ENCODE measurements at regions of chr3 and their contacts with region 1.

Region 1: DNA sequence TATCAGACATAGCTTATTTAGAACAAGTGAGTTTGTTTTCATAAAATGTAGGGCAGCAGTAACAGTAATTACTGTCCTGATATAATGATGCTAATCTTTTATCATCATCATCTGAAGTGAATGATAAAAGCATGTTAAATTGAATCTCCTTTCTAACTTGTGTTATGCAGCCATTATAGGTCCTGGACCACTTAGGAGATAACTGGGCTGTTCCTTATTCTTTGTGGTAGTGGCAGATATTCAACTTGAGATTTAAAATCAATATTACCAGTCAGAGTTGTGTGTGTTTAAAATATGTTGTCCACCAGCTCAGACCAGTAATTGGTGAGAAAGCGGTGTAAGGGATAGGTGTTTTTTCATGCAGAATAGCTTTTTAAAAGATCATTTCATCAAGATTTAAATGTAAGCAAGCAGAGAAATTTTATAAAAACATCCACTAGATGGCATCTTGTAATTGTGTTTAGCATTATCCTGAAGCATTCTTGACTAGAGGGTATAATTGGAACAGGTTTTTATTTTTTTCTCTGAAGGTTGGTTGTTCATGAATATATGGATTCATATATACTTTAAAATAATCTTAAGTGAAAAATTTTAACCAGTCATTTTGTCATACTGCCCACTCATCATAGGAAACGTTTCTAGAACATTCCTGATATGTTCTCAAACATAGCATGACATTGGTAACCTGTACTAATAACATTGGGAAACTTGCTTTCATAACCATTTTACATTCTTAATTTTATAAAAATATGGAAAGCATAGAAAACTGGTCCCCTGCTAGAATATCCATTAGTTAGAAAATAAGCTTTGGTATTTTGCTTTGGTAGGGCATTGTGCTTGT is 153.9 kb downstream of the BBX start:
- DNase-seq: no peak
- H3K4me3 ChIP-seq: no peak overlapping the region
- H3K27ac ChIP-seq: no peak overlapping the region
- H3K27me3 ChIP-seq: no peaks in the 10 kb centered on the region
- CTCF ChIP-seq: peak; percentile 56

Region 2: DNA sequence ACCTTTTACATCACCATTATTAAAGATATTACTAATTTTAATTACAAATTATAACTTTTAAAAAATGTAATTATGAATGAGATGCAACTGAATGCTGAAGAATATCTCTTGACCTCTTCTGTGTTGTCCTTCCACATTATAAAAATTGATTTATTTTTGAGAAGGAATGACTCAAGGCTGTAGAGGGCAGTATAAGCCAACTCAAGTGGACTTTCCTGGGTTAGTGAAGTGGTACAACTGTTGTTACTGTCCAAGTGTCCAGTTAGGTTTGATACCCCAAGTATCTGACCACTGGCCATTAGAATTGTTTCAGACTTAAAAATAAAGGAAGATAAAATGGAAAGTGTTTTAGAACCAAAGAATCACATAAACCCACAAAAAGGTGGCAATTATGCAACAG is 102.0 kb before region 1 on chr3:
- CTCF ChIA-PET with region 1: interaction called, 26 read pairs
- POLR2A ChIA-PET with region 1: no interaction called
- DNase-seq: peak; percentile 18
- H3K4me3 ChIP-seq: no peak overlapping the region
- H3K27ac ChIP-seq: no peak overlapping the region
- H3K27me3 ChIP-seq: no peaks in the 10 kb centered on the region
- CTCF ChIP-seq: peak; percentile 67

Region 3: DNA sequence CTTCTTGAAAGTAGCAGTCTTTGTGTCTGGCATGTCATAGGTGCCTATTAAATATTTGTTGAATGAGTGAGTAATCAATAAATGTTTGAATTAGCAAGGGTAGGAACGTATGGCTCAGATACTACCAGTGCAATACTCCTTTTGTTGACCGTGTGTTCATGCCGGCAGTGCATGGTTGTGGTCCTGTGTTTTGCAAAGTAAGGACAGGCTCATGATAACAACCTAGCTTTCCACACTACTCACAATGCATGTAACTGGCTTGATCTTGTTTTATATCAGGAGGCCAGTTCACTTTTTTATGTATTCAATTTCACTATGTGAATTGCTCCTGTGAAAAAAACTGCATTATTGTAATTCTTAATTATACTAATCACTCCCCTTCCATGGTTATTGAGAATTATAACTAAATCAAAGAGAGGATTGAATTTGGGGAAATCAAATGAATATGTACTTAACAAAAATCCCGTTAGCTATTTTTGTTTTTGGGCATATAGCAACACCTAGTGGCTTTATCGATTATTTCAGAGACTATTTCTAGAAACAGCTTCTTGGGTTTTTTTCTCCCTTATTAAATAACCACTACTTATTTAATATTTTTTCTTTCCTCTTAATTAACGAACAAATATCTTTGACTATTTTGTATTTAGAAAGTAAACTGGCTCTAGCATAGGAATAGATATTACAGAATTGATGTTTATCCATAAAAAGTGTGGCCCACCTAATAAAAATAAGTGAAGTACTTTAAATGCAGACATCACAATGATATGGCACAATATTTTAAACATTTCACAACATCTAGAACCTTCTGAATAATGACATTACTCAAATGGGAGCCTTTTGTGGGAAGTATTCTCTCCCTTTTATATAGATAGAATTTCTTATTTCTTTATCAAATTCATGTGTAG is 64.6 kb after region 1 on chr3:
- CTCF ChIA-PET with region 1: interaction called, 157 read pairs
- POLR2A ChIA-PET with region 1: no interaction called
- DNase-seq: no peak
- H3K4me3 ChIP-seq: no peak overlapping the region
- H3K27ac ChIP-seq: no peak overlapping the region
- H3K27me3 ChIP-seq: no peaks in the 10 kb centered on the region
- CTCF ChIP-seq: peak; percentile 62

Region 4: GRCh38 chr3:107753480-107753879 is 76.8 kb after region 1 on chr3:
- CTCF ChIA-PET with region 1: interaction called, 53 read pairs
- POLR2A ChIA-PET with region 1: no interaction called
- DNase-seq: no peak
- H3K4me3 ChIP-seq: no peak overlapping the region
- H3K27ac ChIP-seq: no peak overlapping the region
- H3K27me3 ChIP-seq: no peaks in the 10 kb centered on the region
- CTCF ChIP-seq: peak; percentile 55